HEK293 (cell line): ENCODE measurements at regions of chr15 and their contacts with region 1.

Region 1: DNA sequence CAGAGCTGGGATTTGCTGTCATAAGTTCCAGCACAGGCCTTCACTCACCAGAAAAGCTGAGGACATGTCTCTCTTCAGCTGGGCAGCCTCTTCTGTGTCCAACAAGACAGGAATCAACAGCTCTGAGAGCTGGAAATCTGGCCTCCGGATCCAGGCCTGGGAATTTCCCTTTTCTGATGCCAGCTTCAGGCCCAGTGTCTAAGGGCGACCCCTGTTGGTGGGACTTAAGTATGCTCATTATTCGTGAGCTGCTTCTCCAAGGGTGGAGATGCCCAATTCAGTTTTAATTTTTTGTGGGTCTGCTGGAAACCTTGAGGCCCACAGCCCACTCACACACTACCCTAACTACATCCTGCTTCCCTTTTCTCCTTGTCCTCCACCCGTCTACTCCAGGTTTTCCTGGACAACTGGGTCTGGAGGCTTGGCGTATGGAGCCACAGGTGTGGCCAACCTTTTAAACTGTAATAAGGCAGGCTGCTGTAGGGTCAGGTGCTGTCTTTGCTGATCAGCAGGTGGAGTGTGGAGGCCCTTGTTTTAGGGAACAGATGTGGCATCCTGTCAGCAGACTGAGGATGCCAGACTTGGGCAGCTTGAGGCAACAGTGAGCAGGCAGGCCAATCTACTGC is 2.6 kb upstream of the CEMIP start:
- H3K4me3 ChIP-seq: no peak overlapping the region
- H3K27ac ChIP-seq: no peak overlapping the region
- H3K4me1 ChIP-seq: peaks cover 28% of the 10 kb centered on the region
- CTCF ChIP-seq: peak; percentile 58; the same call in 1 of the 2 replicates

Region 2: GRCh38 chr15:80567721-80568157 is 208.8 kb before region 1 on chr15:
- CTCF ChIA-PET with region 1: interaction called, 203 read pairs
- POLR2A ChIA-PET with region 1: interaction called, 5 read pairs
- H3K4me3 ChIP-seq: no peak overlapping the region
- H3K27ac ChIP-seq: no peak overlapping the region
- H3K4me1 ChIP-seq: 0 out of 2 replicates have a peak, but pooled peaks cover 4% of the 10 kb centered on the region
- CTCF ChIP-seq: peak; percentile 83; the same call in 1 of the 2 replicates

Region 3: GRCh38 chr15:80660122-80660521 is 116.4 kb before region 1 on chr15:
- CTCF ChIA-PET with region 1: interaction called, 84 read pairs
- POLR2A ChIA-PET with region 1: interaction called, 5 read pairs
- H3K4me3 ChIP-seq: no peak overlapping the region
- H3K27ac ChIP-seq: no peak overlapping the region
- H3K4me1 ChIP-seq: no peaks in the 10 kb centered on the region
- CTCF ChIP-seq: 0 out of 2 replicates have a peak, but pooled peaks have one; percentile 18

Region 4: GRCh38 chr15:80695104-80695910 is 81.2 kb before region 1 on chr15 and contains the start of gene ABHD17C:
- CTCF ChIA-PET with region 1: interaction called, 29 read pairs
- POLR2A ChIA-PET with region 1: interaction called, 5 read pairs
- H3K4me3 ChIP-seq: peak within 1 kb of the TSS; percentile 56
- H3K27ac ChIP-seq: peak within 1 kb of the TSS; percentile 90
- H3K4me1 ChIP-seq: peaks cover 6% of the 10 kb centered on the region
- CTCF ChIP-seq: no peak

Region 5: GRCh38 chr15:80722811-80723210 is 53.7 kb before region 1 on chr15:
- CTCF ChIA-PET with region 1: no interaction called
- POLR2A ChIA-PET with region 1: no interaction called
- H3K4me3 ChIP-seq: no peak overlapping the region
- H3K27ac ChIP-seq: no peak overlapping the region
- H3K4me1 ChIP-seq: no peaks in the 10 kb centered on the region
- CTCF ChIP-seq: no peak

Region 6: DNA sequence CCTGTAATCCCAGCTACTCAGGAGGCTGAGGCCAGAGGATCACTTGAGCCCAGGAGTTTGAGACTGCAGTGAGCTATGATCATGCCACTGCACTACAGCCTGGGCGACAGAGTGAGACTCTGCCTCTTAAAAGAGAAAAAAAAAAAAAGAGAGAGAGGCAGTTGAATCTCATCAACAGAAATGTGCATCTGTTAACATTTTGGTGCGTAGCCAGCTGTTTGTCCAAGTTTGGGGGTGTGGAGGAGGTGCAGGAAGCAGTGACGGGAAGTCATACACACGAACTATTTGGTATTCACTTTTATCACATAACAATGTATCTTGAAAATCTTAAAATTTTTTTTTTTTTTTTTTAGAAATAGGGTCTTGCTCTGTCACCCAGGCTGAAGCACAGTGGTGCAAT is 15.6 kb before region 1 on chr15:
- CTCF ChIA-PET with region 1: interaction called, 27 read pairs
- POLR2A ChIA-PET with region 1: no interaction called
- H3K4me3 ChIP-seq: no peak overlapping the region
- H3K27ac ChIP-seq: no peak overlapping the region
- H3K4me1 ChIP-seq: no peaks in the 10 kb centered on the region
- CTCF ChIP-seq: no peak

Region 7: GRCh38 chr15:80970018-80970658 is 193.6 kb after region 1 on chr15:
- CTCF ChIA-PET with region 1: interaction called, 137 read pairs
- POLR2A ChIA-PET with region 1: interaction called, 8 read pairs
- H3K4me3 ChIP-seq: no peak overlapping the region
- H3K27ac ChIP-seq: no peak overlapping the region
- H3K4me1 ChIP-seq: no peaks in the 10 kb centered on the region
- CTCF ChIP-seq: peak; percentile 42; the same call in 1 of the 2 replicates

Region 8: GRCh38 chr15:81146006-81146405 is 369.5 kb after region 1 on chr15:
- CTCF ChIA-PET with region 1: no interaction called
- POLR2A ChIA-PET with region 1: no interaction called
- H3K4me3 ChIP-seq: no peak overlapping the region
- H3K27ac ChIP-seq: no peak overlapping the region
- H3K4me1 ChIP-seq: peaks cover 3% of the 10 kb centered on the region
- CTCF ChIP-seq: no peak

Region 9: DNA sequence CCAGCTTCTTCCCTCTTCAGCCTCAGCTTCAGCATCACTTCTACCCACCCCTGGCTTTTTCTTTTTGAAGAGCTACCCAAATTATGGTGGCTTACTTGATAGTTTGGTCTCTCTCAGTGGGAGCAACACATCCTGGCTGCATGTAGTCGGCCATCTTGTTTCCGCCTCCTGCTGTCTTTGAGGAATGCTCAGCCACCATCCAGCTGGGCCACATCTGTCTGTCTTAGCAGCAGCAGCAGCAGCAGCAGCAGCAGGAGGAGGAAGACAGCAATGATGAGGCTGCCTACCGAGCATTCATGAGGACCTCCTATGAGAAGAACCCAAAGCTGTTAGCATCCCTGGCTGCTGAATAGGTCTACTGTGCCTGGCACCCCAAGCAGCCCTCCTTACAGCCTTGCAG is 439.9 kb after region 1 on chr15:
- CTCF ChIA-PET with region 1: no interaction called
- POLR2A ChIA-PET with region 1: no interaction called
- H3K4me3 ChIP-seq: no peak overlapping the region
- H3K27ac ChIP-seq: no peak overlapping the region
- H3K4me1 ChIP-seq: no peaks in the 10 kb centered on the region
- CTCF ChIP-seq: no peak